ENCODE measurements at regions of chr12 and their contacts with region 1.

Region 1: GRCh38 chr12:130838951-130839769 is at the start of gene STX2:
- DNase-seq: peak; percentile 73 to 96 (median 84)
- H3K4me3 ChIP-seq: peak within 1 kb of the TSS; percentile 60 to 91 (median 80)
- H3K27ac ChIP-seq: peak within 1 kb of the TSS in 53 of 59 donors; percentile 1 to 86 (median 67)
- H3K27me3 ChIP-seq: no peaks in the 10 kb centered on the region
- CTCF ChIP-seq: peak in 36 of 56 donors; percentile 5 to 53 (median 27)
- total RNA-seq, gene STX2: 9.3 to 25.2 (median 17.9) TPM

Region 2: DNA sequence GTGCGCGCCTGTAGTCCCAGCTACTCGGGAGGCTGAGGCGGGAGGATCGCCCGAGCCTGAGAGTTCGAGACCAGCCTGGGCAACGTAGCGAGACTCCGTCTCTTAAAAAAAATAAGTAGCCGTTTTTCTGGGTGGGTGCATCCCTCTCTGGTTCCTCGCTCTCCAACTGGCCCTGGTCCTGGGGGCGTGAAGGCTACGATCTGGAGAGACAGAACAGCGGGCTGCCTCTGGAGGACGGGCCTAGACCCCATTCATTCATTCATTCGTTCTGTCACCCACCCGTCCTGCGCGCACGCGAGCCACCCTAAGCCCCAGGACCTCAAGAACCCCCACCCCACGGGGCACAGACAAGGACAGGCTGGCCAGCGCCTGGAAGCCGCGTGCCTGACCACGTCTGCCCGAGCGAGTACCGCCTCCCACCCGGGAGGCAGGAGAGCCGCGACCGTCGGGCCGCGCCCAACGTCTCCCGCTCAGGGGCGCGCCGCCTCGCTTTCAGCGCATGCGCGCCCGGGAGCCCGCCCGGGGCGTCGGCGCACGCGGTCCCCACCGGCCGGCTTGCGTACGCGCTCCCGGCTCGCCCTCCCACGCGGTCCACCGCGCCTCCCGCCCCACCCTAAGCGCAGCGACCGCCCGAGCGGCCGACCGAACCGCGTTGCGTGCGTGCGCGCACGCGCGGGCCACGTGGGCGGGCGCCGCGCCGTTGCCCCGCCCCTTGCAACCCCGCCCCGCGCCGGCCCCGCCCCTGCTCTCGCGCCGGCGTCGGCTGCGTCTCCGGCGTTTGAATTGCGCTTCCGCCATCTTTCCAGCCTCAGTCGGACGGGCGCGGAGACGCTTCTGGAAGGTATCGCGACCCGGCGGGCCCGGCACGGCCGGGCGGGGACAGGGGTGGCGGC is 32.4 kb after region 1 on chr12 and contains the start of gene RAN:
- intact Hi-C with region 1: loop called (anchors 1 kb)
- DNase-seq: peak; percentile 69 to 94 (median 89)
- H3K4me3 ChIP-seq: peak within 1 kb of the TSS; percentile 62 to 94 (median 82)
- H3K27ac ChIP-seq: peak within 1 kb of the TSS; percentile 70 to 96 (median 90)
- H3K27me3 ChIP-seq: no peaks in the 10 kb centered on the region
- CTCF ChIP-seq: peak in 11 of 56 donors; percentile 11 to 31 (median 25)
- total RNA-seq, gene RAN: 207 to 502 (median 388) TPM

Region 3: GRCh38 chr12:130933269-130933995 is 94.3 kb after region 1 on chr12:
- intact Hi-C with region 1: no loop called
- DNase-seq: no peak
- H3K4me3 ChIP-seq: peak overlapping the region in 1 of 59 donors; percentile 2
- H3K27ac ChIP-seq: no peak overlapping the region
- H3K27me3 ChIP-seq: peaks cover 0 to 18% (median 0%) of the 10 kb centered on the region in 45 donors
- CTCF ChIP-seq: no peak

Measured in dorsolateral prefrontal cortex (tissue), 120 donors.